ENCODE measurements at regions of chr12 and their contacts with region 1.

Region 1: DNA sequence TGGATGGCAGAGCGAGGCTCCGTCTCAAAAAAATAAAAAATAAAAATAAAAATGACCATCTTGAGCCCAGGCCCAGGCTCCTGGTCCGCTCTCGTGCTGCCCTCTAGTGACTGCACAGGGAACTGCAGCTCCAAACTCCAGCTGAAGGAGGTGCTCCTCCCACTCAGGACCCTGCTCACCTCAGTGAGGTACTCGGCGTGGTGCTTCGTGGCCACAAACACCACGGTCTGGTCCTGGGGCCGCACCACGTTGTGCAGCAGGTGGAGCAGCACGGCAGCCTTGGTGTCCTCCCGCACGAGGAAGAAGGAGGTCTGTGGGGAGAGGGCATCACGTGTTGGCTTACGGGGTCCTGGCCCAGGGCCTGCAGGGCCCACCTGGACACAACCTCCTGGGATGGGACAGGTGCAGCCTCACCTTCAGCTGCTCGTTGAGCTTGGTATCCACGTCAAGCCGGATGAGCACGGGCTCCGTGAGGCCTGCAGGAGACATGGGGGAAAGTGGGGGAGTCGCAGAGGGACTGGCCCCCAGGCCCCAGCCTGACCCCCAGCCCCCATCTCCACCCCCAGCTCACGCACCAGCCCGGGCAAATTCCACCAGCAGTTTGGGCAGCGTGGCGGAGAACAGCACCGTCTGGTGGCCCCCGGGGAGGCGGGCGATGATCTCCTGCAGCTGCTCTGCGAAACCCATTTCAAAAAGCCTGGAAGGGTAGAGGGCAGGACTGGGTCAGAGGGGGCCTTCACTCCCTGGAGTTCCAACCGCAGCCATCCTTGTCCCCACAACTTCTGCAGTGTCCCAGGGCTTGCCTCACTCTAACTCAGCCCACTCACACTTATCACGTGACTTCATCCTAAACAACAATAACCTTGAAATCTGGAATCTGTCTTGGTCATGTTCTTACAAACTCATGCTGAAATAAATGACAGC is 10.6 kb downstream of the DDX54 start:
- DNase-seq: peak; percentile 77
- H3K4me3 Mint-ChIP-seq: no peak overlapping the region
- H3K27ac Mint-ChIP-seq: no peak overlapping the region
- H3K4me1 Mint-ChIP-seq: peaks cover 2% of the 10 kb centered on the region
- H3K27me3 Mint-ChIP-seq: no peaks in the 10 kb centered on the region

Region 2: GRCh38 chr12:113048716-113049127 is 126.0 kb before region 1 on chr12:
- CTCF ChIA-PET with region 1: interaction called, 46 read pairs
- POLR2A ChIA-PET with region 1: no interaction called
- DNase-seq: peak; percentile 57
- H3K4me3 Mint-ChIP-seq: no peak overlapping the region
- H3K27ac Mint-ChIP-seq: no peak overlapping the region
- H3K4me1 Mint-ChIP-seq: no peaks in the 10 kb centered on the region
- H3K27me3 Mint-ChIP-seq: peaks cover 2% of the 10 kb centered on the region

Region 3: DNA sequence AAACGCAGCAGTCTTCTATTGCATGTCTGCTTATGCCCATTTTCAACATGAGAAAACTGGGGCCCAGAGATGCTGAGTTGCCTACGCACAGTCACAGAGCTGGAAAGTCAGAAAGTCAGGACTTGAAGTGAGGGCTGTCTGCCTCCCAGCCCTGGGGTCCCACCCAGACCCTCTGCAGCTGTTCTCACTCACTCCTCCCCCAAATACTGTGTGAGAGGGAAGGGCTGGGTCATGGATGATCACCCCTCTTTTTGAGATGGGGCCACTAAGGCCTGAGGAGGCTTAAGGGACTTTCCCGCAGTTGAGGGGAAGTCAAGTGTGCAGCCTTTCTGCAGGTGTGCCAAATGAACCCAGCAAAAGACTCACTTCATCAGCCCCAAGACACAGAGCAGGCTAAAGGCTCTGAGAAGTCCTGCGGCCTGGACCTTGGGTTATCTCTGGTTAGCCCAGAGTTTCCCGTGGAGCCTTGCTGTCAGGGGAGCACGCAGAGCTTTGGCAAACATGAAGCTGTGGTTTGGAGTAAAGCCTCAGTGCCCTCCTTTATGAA is 99.5 kb before region 1 on chr12:
- CTCF ChIA-PET with region 1: no interaction called
- POLR2A ChIA-PET with region 1: no interaction called
- DNase-seq: no peak
- H3K4me3 Mint-ChIP-seq: no peak overlapping the region
- H3K27ac Mint-ChIP-seq: no peak overlapping the region
- H3K4me1 Mint-ChIP-seq: peaks cover 8% of the 10 kb centered on the region
- H3K27me3 Mint-ChIP-seq: no peaks in the 10 kb centered on the region

Region 4: DNA sequence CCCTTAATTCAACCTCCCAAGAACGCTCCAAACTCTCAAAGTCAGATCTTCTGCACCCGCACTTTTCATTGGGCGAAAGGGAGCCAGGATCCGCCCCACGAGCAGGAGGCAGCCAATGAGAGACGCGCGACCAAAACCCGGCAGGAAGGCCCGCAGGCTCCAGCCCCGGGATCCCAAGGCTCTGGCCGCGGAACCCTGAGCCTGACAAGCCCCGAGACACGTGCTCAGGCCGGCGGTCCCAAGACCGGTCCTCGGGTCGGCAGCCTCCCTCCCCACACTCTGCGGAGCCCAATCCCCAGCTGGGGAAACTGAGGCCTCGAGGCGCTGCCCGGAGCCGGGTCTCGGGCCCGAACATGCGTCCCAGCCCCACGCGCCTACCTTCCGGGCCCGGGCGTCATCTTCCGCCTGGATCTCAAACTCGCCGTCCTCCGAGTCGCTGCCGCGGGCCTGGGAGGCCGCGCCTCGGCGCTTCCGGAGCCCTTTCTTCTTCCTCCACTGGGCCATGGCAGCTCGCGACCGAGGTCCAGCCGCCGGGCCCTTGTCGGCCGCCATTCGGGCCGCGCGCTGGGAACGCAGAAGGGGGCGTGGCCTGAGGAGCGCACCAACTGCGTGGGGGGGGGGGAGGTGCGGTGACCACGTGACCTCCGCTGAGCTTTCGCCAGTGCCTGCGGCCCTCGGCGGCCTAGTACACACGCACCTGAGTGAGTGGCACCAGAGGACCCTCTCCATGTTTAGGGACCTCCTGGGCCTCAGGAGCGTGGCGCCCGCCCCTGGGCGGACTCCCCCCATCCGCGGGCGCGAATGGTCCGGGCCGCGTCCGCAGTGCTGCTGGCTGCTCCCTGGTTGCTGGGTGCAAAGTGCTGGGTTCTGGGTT is 10.4 kb after region 1 on chr12 and contains the starts of genes DDX54 and RITA1:
- CTCF ChIA-PET with region 1: interaction called, 37 read pairs
- POLR2A ChIA-PET with region 1: interaction called, 19 read pairs
- DNase-seq: peak; percentile 91
- H3K4me3 Mint-ChIP-seq: peak within 1 kb of the TSS; percentile 86
- H3K27ac Mint-ChIP-seq: peak within 1 kb of the TSS; percentile 97
- H3K4me1 Mint-ChIP-seq: peaks cover 26% of the 10 kb centered on the region
- H3K27me3 Mint-ChIP-seq: no peaks in the 10 kb centered on the region
- total RNA-seq, gene DDX54: 55.6 to 57.6 TPM
- total RNA-seq, gene RITA1: 14.7 to 16.9 TPM

Measured in activated CD4-positive, alpha-beta memory T cell treated with anti-CD3 and anti-CD28 coated beads, Interleukin-2, amount 10 ng/mL, durations not matched to agents 7 days and 5 days (primary cell).